ENCODE measurements at regions of chr3 and their contacts with region 1.

Region 1: GRCh38 chr3:11498646-11499045 is 145.1 kb downstream of the VGLL4 start:
- DNase-seq: peak; percentile 78
- H3K4me3 ChIP-seq: no peak overlapping the region
- H3K27ac ChIP-seq: peak overlapping the region; percentile 93
- H3K4me1 ChIP-seq: peaks cover 35% of the 10 kb centered on the region
- H3K27me3 ChIP-seq: no peaks in the 10 kb centered on the region
- CTCF ChIP-seq: no peak
- POLR2A ChIP-seq: no peak

Region 2: DNA sequence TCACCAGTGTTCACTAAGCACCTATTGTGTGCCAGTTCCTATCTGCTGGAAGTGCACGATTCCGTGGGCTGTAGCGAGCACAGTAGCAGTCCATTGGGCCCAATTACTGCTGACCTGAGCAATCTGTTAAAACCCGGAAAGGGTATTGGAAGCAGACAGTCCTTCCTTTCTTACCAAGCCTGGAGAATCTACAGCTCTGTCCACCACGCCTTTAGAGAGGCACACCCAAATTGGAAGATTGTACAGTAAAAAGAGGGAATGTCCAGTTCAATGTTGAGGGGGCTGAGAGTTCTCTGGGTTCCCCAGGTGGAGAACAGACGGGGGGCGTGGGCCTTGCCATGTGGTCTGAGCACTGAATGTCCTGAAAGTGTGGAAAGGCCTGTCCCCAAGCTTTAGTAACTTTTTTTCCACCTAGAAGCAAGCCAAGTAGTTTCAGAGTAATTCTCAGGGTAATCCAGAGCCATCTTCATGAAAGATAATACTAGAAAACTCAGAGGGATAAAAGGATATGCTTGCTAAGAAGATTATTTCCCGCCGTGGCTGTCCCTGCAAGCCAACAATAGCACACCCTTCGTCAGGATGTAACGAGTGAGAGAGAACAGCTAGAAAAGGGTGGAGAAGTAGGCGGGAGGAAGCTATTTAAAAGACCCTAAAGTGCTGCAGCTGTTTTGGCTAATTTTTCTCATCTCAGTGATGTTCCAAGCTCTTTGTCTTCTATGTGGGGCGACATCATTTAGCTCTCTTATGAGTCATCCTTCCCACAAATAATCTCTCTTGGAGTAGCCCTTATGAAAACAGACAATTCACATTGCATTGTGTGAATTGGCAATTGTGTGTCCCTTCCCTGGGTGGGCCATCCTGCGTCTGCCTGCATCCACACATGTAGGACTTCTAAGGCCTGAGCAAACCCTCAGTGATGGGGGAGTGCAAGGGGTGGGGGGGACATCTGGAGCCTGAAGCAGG is 45.5 kb before region 1 on chr3:
- CTCF ChIA-PET with region 1: interaction called, 3 read pairs
- POLR2A ChIA-PET with region 1: no interaction called
- dilution Hi-C with region 1: no loop called
- intact Hi-C with region 1: loop called (anchors 2 kb)
- DNase-seq: peak; percentile 85
- H3K4me3 ChIP-seq: no peak overlapping the region
- H3K27ac ChIP-seq: peak overlapping the region; percentile 48
- H3K4me1 ChIP-seq: peaks cover 15% of the 10 kb centered on the region
- H3K27me3 ChIP-seq: no peaks in the 10 kb centered on the region
- CTCF ChIP-seq: no peak
- POLR2A ChIP-seq: no peak

Region 3: DNA sequence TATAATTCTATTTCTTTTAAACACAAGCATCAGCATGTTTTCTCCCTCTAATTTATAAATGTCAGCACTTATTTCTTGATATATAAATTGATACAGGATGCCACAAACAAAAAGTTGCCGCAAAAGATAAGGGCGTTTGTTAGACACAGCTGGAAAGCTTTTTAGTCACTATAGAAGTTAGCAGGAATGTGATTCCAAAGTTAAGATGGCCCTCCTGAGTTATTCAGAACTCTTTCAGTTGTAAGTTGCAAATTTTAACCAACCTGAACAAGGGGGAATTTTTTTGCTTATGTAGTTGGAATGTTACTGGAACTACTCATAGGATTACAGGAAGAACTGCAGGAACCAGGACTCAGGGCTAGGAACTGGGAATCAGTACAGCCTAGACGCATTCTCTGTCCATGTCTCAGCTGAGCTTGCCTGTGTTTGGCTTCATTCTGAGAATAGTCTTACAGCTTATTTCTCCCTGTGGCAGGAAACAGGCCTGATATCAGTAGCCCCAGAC is 21.2 kb before region 1 on chr3:
- CTCF ChIA-PET with region 1: interaction called, 3 read pairs
- POLR2A ChIA-PET with region 1: no interaction called
- dilution Hi-C with region 1: no loop called
- intact Hi-C with region 1: loop called (anchors 1 kb)
- DNase-seq: peak; percentile 95
- H3K4me3 ChIP-seq: peak overlapping the region; percentile 10 to 82 (median 39)
- H3K27ac ChIP-seq: peak overlapping the region; percentile 100
- H3K4me1 ChIP-seq: peaks cover 47% of the 10 kb centered on the region
- H3K27me3 ChIP-seq: no peaks in the 10 kb centered on the region
- CTCF ChIP-seq: no peak
- POLR2A ChIP-seq: peak; percentile 81

Region 4: DNA sequence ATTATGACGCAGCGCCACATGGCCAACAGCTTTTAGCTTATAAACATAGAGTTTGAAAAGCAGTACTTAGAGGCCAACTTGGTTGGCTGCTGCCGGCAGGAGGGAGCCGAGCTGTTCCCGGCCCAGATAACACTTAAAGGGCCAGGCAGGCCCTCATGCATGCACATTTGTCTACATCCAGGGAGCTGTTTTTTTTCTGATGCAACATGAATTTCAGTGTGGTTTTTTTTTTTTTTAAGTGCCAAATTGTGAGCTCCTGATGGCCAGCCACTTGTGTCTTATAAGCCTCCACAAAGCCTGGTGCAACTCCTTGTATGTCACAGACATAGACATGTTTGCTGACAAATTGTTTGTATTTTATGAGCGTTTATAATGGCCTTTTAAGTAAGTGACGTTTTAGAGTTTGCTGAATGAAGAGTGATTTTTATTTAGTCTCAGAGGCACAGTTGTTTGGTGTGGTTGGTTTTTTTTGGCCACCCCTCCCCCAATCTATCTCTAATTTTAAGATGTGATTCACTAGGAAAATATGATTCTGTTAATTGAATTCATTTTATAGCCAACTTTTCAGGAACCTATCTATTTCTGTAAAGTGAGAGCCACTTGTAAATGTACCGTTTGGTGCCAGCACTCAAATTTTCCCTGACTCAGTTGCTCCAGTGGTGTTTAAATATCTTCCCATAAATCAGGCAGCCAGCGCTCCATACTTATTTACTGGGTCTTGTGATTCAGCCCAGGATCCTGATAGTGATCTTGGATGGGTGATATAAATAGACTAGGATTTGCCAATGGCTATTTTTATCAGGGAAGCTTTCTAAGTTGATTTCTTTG is 10.7 kb after region 1 on chr3:
- CTCF ChIA-PET with region 1: interaction called, 10 read pairs
- POLR2A ChIA-PET with region 1: no interaction called
- dilution Hi-C with region 1: no loop called
- intact Hi-C with region 1: loop called (anchors 1 kb)
- DNase-seq: peak; percentile 89
- H3K4me3 ChIP-seq: no peak overlapping the region
- H3K27ac ChIP-seq: peak overlapping the region; percentile 87
- H3K4me1 ChIP-seq: peaks cover 36% of the 10 kb centered on the region
- H3K27me3 ChIP-seq: no peaks in the 10 kb centered on the region
- CTCF ChIP-seq: no peak
- POLR2A ChIP-seq: no peak

Region 5: DNA sequence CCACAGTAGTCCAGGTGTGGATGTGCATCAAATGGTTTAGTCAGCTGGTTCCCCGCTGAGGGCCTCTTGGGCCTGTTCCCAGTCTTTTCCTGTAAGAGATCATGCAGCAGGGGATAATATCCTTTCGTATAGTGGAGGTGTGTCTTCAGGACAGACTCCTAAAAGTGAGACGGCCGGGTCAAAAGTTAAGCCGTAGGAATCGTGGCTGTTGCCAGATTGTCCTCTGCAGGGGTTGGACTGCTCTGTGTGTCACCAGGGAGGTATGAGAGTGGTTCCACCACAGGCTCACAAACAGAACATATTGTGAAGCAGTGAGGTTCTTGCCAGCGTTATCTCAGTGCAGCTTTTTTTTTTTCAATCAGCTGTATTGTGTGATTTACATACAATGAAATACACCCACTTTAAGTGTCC is 50.1 kb after region 1 on chr3:
- CTCF ChIA-PET with region 1: no interaction called
- POLR2A ChIA-PET with region 1: no interaction called
- dilution Hi-C with region 1: no loop called
- intact Hi-C with region 1: loop called (anchors 1 kb)
- DNase-seq: peak; percentile 85
- H3K4me3 ChIP-seq: no peak overlapping the region
- H3K27ac ChIP-seq: peak overlapping the region; percentile 39
- H3K4me1 ChIP-seq: peaks cover 16% of the 10 kb centered on the region
- H3K27me3 ChIP-seq: no peaks in the 10 kb centered on the region
- CTCF ChIP-seq: no peak
- POLR2A ChIP-seq: no peak

Region 6: GRCh38 chr3:11558002-11558401 is 59.4 kb after region 1 on chr3:
- CTCF ChIA-PET with region 1: no interaction called
- POLR2A ChIA-PET with region 1: no interaction called
- dilution Hi-C with region 1: no loop called
- intact Hi-C with region 1: loop called (anchors 2 kb)
- DNase-seq: peak; percentile 76
- H3K4me3 ChIP-seq: no peak overlapping the region
- H3K27ac ChIP-seq: peak overlapping the region; percentile 78
- H3K4me1 ChIP-seq: peaks cover 51% of the 10 kb centered on the region
- H3K27me3 ChIP-seq: no peaks in the 10 kb centered on the region
- CTCF ChIP-seq: no peak
- POLR2A ChIP-seq: no peak

Region 7: DNA sequence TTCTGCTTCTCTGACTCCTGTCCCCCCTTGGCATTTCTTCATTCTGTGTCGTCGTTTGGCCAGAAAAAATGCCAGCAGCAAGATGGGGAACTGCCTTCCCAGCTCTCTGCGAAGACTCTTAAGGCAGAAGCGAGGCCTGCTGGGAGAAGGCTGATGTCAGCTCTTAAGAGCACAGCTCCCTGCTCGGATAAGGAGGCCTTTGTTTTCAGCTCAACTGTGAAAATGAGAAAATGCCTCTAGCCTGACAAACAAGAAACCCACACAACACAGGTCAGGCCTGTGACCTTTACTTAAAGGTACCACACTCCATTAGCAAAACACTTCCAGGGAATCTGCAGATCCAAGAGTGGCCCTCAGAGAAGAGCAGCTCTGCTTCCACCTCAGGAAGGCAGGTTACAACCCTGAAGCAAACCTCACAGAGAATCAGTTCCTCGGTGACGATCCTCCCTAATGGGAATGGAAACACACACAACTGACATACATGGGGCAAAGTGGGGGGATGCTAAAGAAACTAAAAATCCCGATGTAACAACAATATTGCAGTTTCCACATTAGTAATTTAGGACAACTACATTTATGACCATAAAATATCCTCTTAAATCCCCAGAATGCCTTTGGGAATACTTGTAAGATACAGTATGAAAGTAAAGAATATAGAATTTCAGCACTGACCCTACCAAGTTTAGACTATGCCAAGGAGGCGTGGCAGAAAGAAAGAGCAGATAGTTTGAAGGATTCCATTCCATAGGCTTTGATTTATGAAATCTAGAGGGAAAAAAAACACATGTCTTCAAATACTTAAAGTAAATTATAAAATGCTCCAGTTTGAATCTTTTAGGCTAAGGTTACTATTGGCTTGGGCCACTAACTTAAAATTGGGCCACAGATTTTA is 93.0 kb after region 1 on chr3:
- CTCF ChIA-PET with region 1: no interaction called
- POLR2A ChIA-PET with region 1: no interaction called
- dilution Hi-C with region 1: no loop called
- intact Hi-C with region 1: no loop called
- DNase-seq: peak; percentile 70
- H3K4me3 ChIP-seq: no peak overlapping the region
- H3K27ac ChIP-seq: peak overlapping the region; percentile 41
- H3K4me1 ChIP-seq: peaks cover 41% of the 10 kb centered on the region
- H3K27me3 ChIP-seq: no peaks in the 10 kb centered on the region
- CTCF ChIP-seq: no peak
- POLR2A ChIP-seq: no peak

Measured in endothelial cell of umbilical vein (primary cell).